ENCODE measurements at regions of chr17 and their contacts with region 1.

Region 1: DNA sequence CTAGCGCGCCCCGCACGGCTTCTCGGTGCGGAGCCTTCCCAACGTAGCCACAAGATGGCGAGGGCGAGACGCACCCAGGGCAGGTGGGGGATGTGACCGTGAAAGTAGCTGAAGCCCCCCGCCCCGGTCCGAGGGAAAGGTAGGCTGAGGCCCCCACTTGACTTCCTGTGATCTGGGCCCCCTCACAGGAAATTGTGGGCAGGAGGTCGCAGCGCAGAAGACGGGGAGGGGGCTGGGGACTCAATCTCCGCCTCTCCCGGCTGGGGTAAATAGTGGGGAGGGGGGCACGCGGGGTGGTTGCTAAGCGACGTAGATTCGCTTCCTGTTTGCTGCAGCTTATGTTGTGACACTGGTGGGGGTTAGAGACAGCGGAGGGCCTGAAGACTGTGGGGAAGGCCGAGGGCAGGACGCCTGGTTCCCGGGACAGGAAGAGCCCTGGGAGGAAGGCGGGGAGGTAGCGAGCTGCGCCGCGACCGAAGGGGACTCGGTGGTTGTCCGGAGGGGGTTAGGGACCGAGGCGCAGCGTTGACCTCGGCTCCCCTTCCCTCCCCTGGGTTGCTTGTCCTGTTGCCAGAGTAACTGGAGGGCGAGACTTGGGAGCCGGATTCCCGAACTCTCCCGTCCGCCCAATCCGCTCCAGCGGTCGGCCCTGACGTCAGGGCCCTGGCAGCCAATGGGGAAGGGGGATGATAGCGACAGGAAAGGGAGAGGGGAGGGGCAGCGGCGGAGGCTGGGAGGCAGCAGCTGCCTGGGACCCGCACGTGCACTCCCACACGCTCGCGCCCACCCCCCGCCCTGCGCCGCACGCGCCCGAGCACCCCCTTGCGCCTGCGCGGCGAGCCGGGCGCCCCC is 1.2 kb downstream of the KDM6B start:
- DNase-seq: peak; percentile 93 to 99
- H3K4me3 ChIP-seq: peak overlapping the region; percentile 68 to 80
- H3K27ac ChIP-seq: peak overlapping the region; percentile 91 to 98
- H3K4me1 ChIP-seq: peaks cover 8 to 29% of the 10 kb centered on the region in 2 donors
- H3K27me3 ChIP-seq: no peaks in the 10 kb centered on the region
- CTCF ChIP-seq: peak; percentile 82 to 94 (median 85)

Region 2: GRCh38 chr17:7214300-7215135 is 620.7 kb before region 1 on chr17:
- intact Hi-C with region 1: loop called (anchors 10 kb)
- DNase-seq: peak; percentile 96 to 99
- H3K4me3 ChIP-seq: peak overlapping the region; percentile 62 to 72
- H3K27ac ChIP-seq: peak overlapping the region; percentile 96 to 100
- H3K4me1 ChIP-seq: peaks cover 20 to 27% of the 10 kb centered on the region in 2 donors
- H3K27me3 ChIP-seq: no peaks in the 10 kb centered on the region
- CTCF ChIP-seq: peak; percentile 13 to 47 (median 41)

Region 3: GRCh38 chr17:7572588-7573323 is 262.4 kb before region 1 on chr17:
- intact Hi-C with region 1: loop called (anchors 5 kb)
- DNase-seq: peak; percentile 99 to 100
- H3K4me3 ChIP-seq: peak overlapping the region; percentile 78 to 94
- H3K27ac ChIP-seq: peak overlapping the region; percentile 93 to 99
- H3K4me1 ChIP-seq: peaks cover 0 to 15% of the 10 kb centered on the region in 2 donors
- H3K27me3 ChIP-seq: no peaks in the 10 kb centered on the region
- CTCF ChIP-seq: no peak

Region 4: DNA sequence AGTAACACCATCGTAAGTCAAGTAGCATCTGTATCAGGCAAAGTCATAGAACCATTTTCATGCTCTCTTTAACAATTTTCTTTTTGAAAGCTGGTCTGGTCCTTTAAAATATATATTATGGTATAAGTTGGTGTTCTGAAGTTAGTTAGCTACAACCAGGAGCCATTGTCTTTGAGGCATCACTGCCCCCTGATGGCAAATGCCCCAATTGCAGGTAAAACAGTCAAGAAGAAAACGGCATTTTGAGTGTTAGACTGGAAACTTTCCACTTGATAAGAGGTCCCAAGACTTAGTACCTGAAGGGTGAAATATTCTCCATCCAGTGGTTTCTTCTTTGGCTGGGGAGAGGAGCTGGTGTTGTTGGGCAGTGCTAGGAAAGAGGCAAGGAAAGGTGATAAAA is 161.9 kb before region 1 on chr17:
- intact Hi-C with region 1: no loop called
- DNase-seq: no peak
- H3K4me3 ChIP-seq: no peak overlapping the region
- H3K27ac ChIP-seq: no peak overlapping the region
- H3K4me1 ChIP-seq: no peaks in the 10 kb centered on the region
- H3K27me3 ChIP-seq: no peaks in the 10 kb centered on the region
- CTCF ChIP-seq: no peak

Region 5: GRCh38 chr17:7856883-7857723 is 21.9 kb after region 1 on chr17 and contains the start of gene NAA38:
- intact Hi-C with region 1: loop called (anchors 1 kb)
- DNase-seq: peak; percentile 92 to 99
- H3K4me3 ChIP-seq: peak within 1 kb of the TSS; percentile 73 to 76
- H3K27ac ChIP-seq: peak within 1 kb of the TSS; percentile 87 to 88
- H3K4me1 ChIP-seq: peaks cover 9 to 25% of the 10 kb centered on the region in 2 donors
- H3K27me3 ChIP-seq: no peaks in the 10 kb centered on the region
- CTCF ChIP-seq: peak; percentile 39 to 55 (median 51)
- total RNA-seq, gene NAA38: 59.0 TPM